ENCODE measurements at regions of chr1 and their contacts with region 1.

Region 1: GRCh38 chr1:110053557-110054428 is 16.7 kb downstream of the ALX3 start:
- DNase-seq: peak in 9 of 10 donors; percentile 60 to 84 (median 81)
- H3K4me3 ChIP-seq: no peak overlapping the region
- H3K27ac ChIP-seq: peak overlapping the region in 2 of 59 donors; percentile 12 to 13
- H3K27me3 ChIP-seq: no peaks in the 10 kb centered on the region
- CTCF ChIP-seq: peak; percentile 71 to 99 (median 95)

Region 2: GRCh38 chr1:109954041-109954512 is 99.7 kb before region 1 on chr1:
- intact Hi-C with region 1: no loop called
- DNase-seq: no peak
- H3K4me3 ChIP-seq: no peak overlapping the region
- H3K27ac ChIP-seq: no peak overlapping the region
- H3K27me3 ChIP-seq: no peaks in the 10 kb centered on the region
- CTCF ChIP-seq: no peak

Region 3: GRCh38 chr1:110100335-110100734 is 46.5 kb after region 1 on chr1:
- intact Hi-C with region 1: loop called (anchors 2 to 5 kb)
- DNase-seq: no peak
- H3K4me3 ChIP-seq: no peak overlapping the region
- H3K27ac ChIP-seq: no peak overlapping the region
- H3K27me3 ChIP-seq: peaks cover 0 to 10% (median 0%) of the 10 kb centered on the region in 45 donors
- CTCF ChIP-seq: no peak

Region 4: GRCh38 chr1:110106013-110106941 is 52.5 kb after region 1 on chr1:
- intact Hi-C with region 1: loop called (anchors 2 to 5 kb)
- DNase-seq: peak; percentile 50 to 80 (median 66)
- H3K4me3 ChIP-seq: no peak overlapping the region
- H3K27ac ChIP-seq: no peak overlapping the region
- H3K27me3 ChIP-seq: no peaks in the 10 kb centered on the region
- CTCF ChIP-seq: peak; percentile 49 to 93 (median 84)

Region 5: DNA sequence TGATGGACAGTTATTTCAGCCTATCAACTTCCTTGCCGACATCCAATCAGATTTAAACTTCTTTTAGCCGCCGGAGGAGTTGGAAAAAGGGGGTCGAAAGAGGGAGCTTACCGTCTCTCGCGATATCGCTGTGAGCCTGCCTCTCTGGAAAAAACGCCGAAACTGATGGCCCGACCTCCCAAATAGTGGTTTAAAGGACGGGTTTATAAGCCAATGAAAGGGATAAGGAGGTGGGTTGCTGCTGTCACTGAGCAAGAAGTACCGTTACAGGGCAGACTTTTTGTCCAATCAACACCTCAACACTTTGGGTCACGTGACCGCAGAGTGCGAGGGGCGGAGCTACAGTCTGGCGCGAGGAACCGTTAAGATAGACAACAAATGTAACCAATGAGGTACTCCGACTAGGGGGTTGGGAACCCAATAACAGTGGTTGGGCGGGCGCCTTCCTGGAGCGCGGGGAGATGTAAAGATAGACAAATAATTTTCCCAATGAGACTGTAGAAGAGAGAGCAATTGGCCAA is 285.2 kb after region 1 on chr1 and contains the start of gene RBM15:
- intact Hi-C with region 1: loop called in 1 of 2 experiments (anchors 10 kb)
- DNase-seq: peak; percentile 95 to 100 (median 99)
- H3K4me3 ChIP-seq: peak within 1 kb of the TSS; percentile 73 to 100 (median 94)
- H3K27ac ChIP-seq: peak within 1 kb of the TSS; percentile 84 to 100 (median 97)
- H3K27me3 ChIP-seq: no peaks in the 10 kb centered on the region
- CTCF ChIP-seq: no peak
- total RNA-seq, gene RBM15: 17.5 to 31.2 (median 23.8) TPM

Region 6: GRCh38 chr1:110594456-110595352 is 540.9 kb after region 1 on chr1:
- intact Hi-C with region 1: no loop called
- DNase-seq: peak in 9 of 10 donors; percentile 39 to 88 (median 69)
- H3K4me3 ChIP-seq: peak overlapping the region in 24 of 59 donors; percentile 0 to 39 (median 18)
- H3K27ac ChIP-seq: peak overlapping the region in 57 of 59 donors; percentile 0 to 95 (median 78)
- H3K27me3 ChIP-seq: no peaks in the 10 kb centered on the region
- CTCF ChIP-seq: no peak